Ascending aorta (tissue), 2 donors: ENCODE measurements at regions of chr17 and their contacts with region 1.

Region 1: GRCh38 chr17:46108550-46109110 is 84.6 kb downstream of the KANSL1 start:
- DNase-seq: no peak
- H3K4me3 ChIP-seq: no peak overlapping the region
- H3K27ac ChIP-seq: no peak overlapping the region
- H3K4me1 ChIP-seq: peaks cover 5 to 25% of the 10 kb centered on the region in 2 donors
- H3K27me3 ChIP-seq: no peaks in the 10 kb centered on the region
- CTCF ChIP-seq: no peak

Region 2: GRCh38 chr17:46159686-46160085 is 51.1 kb after region 1 on chr17:
- intact Hi-C with region 1: loop called (anchors 10 kb)
- DNase-seq: no peak
- H3K4me3 ChIP-seq: no peak overlapping the region
- H3K27ac ChIP-seq: no peak overlapping the region
- H3K4me1 ChIP-seq: peaks cover 6 to 51% of the 10 kb centered on the region in 2 donors
- H3K27me3 ChIP-seq: no peaks in the 10 kb centered on the region
- CTCF ChIP-seq: no peak